ENCODE measurements at regions of chr14 and their contacts with region 1.

Region 1: DNA sequence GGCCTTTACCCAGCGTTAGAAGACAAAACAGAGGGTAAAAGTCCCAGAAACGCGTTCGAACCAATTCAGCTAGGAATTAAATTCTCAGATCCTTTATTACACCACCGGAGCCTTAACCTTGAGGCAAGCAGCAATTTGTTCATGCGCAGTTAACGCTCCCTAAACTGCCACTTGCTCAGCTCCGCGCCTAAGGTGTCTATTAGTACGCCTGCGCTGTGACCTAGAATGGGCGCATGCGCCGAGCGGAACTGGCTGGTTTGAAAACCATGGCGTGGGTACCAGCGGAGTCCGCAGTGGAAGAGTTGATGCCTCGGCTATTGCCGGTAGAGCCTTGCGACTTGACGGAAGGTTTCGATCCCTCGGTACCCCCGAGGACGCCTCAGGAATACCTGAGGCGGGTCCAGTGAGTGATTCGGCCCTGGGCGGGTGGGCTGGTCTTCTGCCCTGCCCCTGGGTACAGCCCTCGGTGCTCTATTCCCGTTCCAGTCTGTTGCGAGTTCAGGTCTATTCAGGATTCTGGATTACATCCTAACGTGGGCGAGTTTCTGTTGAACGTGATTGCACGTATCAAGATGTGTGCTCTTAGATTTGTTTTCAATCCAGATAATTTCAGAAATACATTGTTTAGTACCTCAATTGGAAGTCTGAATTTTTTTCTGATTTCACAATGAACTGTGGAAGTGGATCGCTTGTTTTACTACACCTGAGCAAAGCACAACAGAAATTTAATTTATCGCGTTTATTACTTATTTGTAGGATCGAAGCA is at the start of gene GEMIN2:
- DNase-seq: peak; percentile 93 to 98 (median 96)
- ATAC-seq: peak; percentile 99 to 100
- H3K4me3 ChIP-seq: peak within 1 kb of the TSS; percentile 61
- H3K27ac ChIP-seq: peak within 1 kb of the TSS; percentile 40
- H3K4me1 ChIP-seq: no peaks in the 10 kb centered on the region
- H3K27me3 ChIP-seq: no peaks in the 10 kb centered on the region
- total RNA-seq, gene GEMIN2: 6.4 to 8.8 (median 6.9) TPM

Region 2: GRCh38 chr14:39302124-39302810 is 188.0 kb after region 1 on chr14:
- intact Hi-C with region 1: no loop called
- DNase-seq: no peak
- ATAC-seq: no peak
- H3K4me3 ChIP-seq: no peak overlapping the region
- H3K27ac ChIP-seq: no peak overlapping the region
- H3K4me1 ChIP-seq: no peaks in the 10 kb centered on the region
- H3K27me3 ChIP-seq: no peaks in the 10 kb centered on the region

Region 3: DNA sequence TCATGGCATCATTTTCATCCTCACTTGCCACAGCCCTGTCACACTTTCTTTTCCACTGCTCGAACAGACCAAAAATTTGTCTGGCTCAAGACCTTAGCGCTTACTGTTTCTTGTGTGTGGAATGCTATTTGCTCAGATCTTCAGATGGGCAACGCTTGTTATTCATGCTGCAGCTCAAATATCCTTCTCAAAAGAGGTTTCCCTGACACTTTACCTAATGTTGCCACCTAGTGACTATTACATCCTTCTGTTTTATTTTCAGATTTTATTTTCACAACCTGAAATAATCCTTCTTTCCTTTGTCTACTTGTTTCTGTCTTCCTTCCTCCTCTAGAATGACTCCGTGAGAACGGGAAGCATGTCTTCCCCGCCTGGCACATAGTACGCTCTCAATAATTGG is 312.3 kb after region 1 on chr14:
- intact Hi-C with region 1: loop called in 1 of 4 experiments (anchors 10 kb)
- DNase-seq: no peak
- ATAC-seq: no peak
- H3K4me3 ChIP-seq: no peak overlapping the region
- H3K27ac ChIP-seq: no peak overlapping the region
- H3K4me1 ChIP-seq: peaks cover 7% of the 10 kb centered on the region
- H3K27me3 ChIP-seq: no peaks in the 10 kb centered on the region

Measured in right cardiac atrium (tissue), 5 donors.